ENCODE measurements at regions of chr3 and their contacts with region 1.

Region 1: GRCh38 chr3:101573449-101574387 is at the start of gene PCNP:
- DNase-seq: peak; percentile 91
- H3K27ac ChIP-seq: peak within 1 kb of the TSS; percentile 99
- CTCF ChIP-seq: peak; percentile 86

Region 2: GRCh38 chr3:101484805-101485620 is 88.7 kb before region 1 on chr3:
- CTCF ChIA-PET with region 1: no interaction called
- POLR2A ChIA-PET with region 1: no interaction called
- DNase-seq: peak; percentile 57
- H3K27ac ChIP-seq: peak overlapping the region; percentile 20
- CTCF ChIP-seq: no peak

Region 3: GRCh38 chr3:101512646-101513418 is 60.9 kb before region 1 on chr3 and contains the start of gene SENP7:
- CTCF ChIA-PET with region 1: no interaction called
- POLR2A ChIA-PET with region 1: interaction called, 10 read pairs
- DNase-seq: peak; percentile 84
- H3K27ac ChIP-seq: peak within 1 kb of the TSS; percentile 95
- CTCF ChIP-seq: no peak

Region 4: GRCh38 chr3:101803173-101803782 is 229.6 kb after region 1 on chr3:
- CTCF ChIA-PET with region 1: no interaction called
- POLR2A ChIA-PET with region 1: no interaction called
- DNase-seq: peak; percentile 62
- H3K27ac ChIP-seq: no peak overlapping the region
- CTCF ChIP-seq: peak; percentile 89